ENCODE measurements at regions of chr5 and their contacts with region 1.

Region 1: GRCh38 chr5:32092938-32093812 is 80.9 kb downstream of the GOLPH3 start:
- DNase-seq: peak; percentile 82
- ATAC-seq: peak; percentile 97
- H3K4me3 Mint-ChIP-seq: no peak overlapping the region
- H3K27ac Mint-ChIP-seq: no peak overlapping the region
- H3K4me1 Mint-ChIP-seq: peaks cover 2% of the 10 kb centered on the region
- H3K27me3 Mint-ChIP-seq: no peaks in the 10 kb centered on the region

Region 2: DNA sequence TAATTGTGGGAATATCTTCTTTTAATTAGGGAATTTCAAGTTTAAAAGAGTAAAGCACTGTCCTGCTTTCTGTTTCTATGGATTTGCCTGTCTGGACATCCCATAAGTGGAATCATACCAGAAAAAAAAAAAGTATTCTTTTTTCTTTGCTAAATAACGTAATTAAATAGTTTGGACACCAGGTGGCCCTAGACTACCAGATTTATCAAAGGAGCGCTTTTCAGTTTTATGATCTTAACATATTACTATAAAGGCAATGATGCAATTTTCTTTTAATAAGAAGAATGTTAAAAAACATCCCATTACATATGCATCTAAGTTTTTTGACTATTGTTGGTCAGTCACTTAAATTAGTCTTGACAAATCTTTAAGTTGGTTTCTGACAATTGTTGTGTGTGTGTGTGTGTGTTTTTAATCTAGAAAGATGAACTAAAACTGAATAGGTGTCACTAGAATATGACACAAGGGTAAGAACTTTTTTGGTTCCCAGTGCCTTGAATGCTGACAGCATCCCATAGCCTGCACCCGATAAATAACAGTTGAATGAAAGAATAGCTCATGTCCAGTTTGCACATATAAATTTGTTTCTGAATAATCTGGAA is 511.6 kb before region 1 on chr5:
- CTCF ChIA-PET with region 1: interaction called, 10 read pairs
- POLR2A ChIA-PET with region 1: no interaction called
- intact Hi-C with region 1: loop called (anchors 1 kb)
- DNase-seq: no peak
- ATAC-seq: no peak
- H3K4me3 Mint-ChIP-seq: no peak overlapping the region
- H3K27ac Mint-ChIP-seq: no peak overlapping the region
- H3K4me1 Mint-ChIP-seq: no peaks in the 10 kb centered on the region
- H3K27me3 Mint-ChIP-seq: peaks cover 10% of the 10 kb centered on the region

Region 3: GRCh38 chr5:31825518-31826068 is 267.6 kb before region 1 on chr5:
- CTCF ChIA-PET with region 1: interaction called, 32 read pairs
- POLR2A ChIA-PET with region 1: no interaction called
- intact Hi-C with region 1: loop called (anchors 1 kb)
- DNase-seq: peak; percentile 65
- ATAC-seq: peak; percentile 90
- H3K4me3 Mint-ChIP-seq: no peak overlapping the region
- H3K27ac Mint-ChIP-seq: no peak overlapping the region
- H3K4me1 Mint-ChIP-seq: peaks cover 6% of the 10 kb centered on the region
- H3K27me3 Mint-ChIP-seq: peaks cover 3% of the 10 kb centered on the region

Region 4: GRCh38 chr5:31854181-31855133 is 238.7 kb before region 1 on chr5:
- CTCF ChIA-PET with region 1: interaction called, 17 read pairs
- POLR2A ChIA-PET with region 1: no interaction called
- intact Hi-C with region 1: no loop called
- DNase-seq: peak; percentile 38
- ATAC-seq: peak; percentile 60
- H3K4me3 Mint-ChIP-seq: peak overlapping the region; percentile 70
- H3K27ac Mint-ChIP-seq: peak overlapping the region; percentile 15
- H3K4me1 Mint-ChIP-seq: peaks cover 15% of the 10 kb centered on the region
- H3K27me3 Mint-ChIP-seq: peaks cover 9% of the 10 kb centered on the region

Region 5: GRCh38 chr5:32069396-32069795 is 23.8 kb before region 1 on chr5:
- CTCF ChIA-PET with region 1: no interaction called
- POLR2A ChIA-PET with region 1: no interaction called
- intact Hi-C with region 1: no loop called
- DNase-seq: no peak
- ATAC-seq: no peak
- H3K4me3 Mint-ChIP-seq: no peak overlapping the region
- H3K27ac Mint-ChIP-seq: no peak overlapping the region
- H3K4me1 Mint-ChIP-seq: peaks cover 2% of the 10 kb centered on the region
- H3K27me3 Mint-ChIP-seq: no peaks in the 10 kb centered on the region

Region 6: GRCh38 chr5:32103521-32103920 is 10.3 kb after region 1 on chr5:
- CTCF ChIA-PET with region 1: interaction called, 10 read pairs
- POLR2A ChIA-PET with region 1: no interaction called
- intact Hi-C with region 1: no loop called
- DNase-seq: no peak
- ATAC-seq: no peak
- H3K4me3 Mint-ChIP-seq: no peak overlapping the region
- H3K27ac Mint-ChIP-seq: no peak overlapping the region
- H3K4me1 Mint-ChIP-seq: no peaks in the 10 kb centered on the region
- H3K27me3 Mint-ChIP-seq: no peaks in the 10 kb centered on the region

Measured in activated CD4-positive, alpha-beta T cell treated with anti-CD3 and anti-CD28 coated beads for 36 hours (primary cell).